SK-N-SH (cell line): ENCODE measurements at regions of chr3 and their contacts with region 1.

Region 1: GRCh38 chr3:192816351-192816750 is 89.0 kb upstream of the FGF12 start:
- DNase-seq: peak; percentile 41
- H3K4me3 ChIP-seq: peak overlapping the region in 1 of 2 experiments; percentile 8; a peak in 1 of 4 replicates
- H3K27ac ChIP-seq: no peak overlapping the region
- H3K4me1 ChIP-seq: peaks cover 2 to 8% of the 10 kb centered on the region in 2 experiments; a peak in 2 of 4 replicates
- H3K27me3 ChIP-seq: no peaks in the 10 kb centered on the region
- CTCF ChIP-seq: peak; percentile 79
- EP300 ChIP-seq: no peak
- RAD21 ChIP-seq: peak; percentile 93

Region 2: DNA sequence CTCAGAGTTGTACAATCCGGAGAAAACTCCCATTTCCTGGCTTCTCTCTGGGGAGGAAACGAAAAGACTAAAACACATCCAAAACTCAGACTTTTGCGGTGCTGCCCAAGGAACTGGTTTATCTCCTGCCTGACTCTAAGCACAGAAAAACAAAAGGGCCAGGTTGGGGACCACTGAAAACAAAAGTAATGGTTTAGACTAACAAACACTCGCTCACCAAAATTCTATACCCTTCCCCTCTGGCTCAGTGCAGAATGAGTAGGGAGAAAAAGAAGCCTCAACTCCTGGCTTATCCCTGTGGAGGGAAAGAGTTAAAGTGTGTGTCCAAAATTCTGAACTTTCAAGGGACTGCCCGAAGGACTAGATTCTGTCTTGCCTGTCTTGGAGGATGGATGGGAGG is 262.6 kb before region 1 on chr3:
- CTCF ChIA-PET with region 1: no interaction called
- POLR2A ChIA-PET with region 1: no interaction called
- DNase-seq: no peak
- H3K4me3 ChIP-seq: no peak overlapping the region
- H3K27ac ChIP-seq: no peak overlapping the region
- H3K4me1 ChIP-seq: no peaks in the 10 kb centered on the region
- H3K27me3 ChIP-seq: no peaks in the 10 kb centered on the region; the same call in 1 of the 2 replicates
- CTCF ChIP-seq: no peak
- EP300 ChIP-seq: no peak
- RAD21 ChIP-seq: no peak

Region 3: DNA sequence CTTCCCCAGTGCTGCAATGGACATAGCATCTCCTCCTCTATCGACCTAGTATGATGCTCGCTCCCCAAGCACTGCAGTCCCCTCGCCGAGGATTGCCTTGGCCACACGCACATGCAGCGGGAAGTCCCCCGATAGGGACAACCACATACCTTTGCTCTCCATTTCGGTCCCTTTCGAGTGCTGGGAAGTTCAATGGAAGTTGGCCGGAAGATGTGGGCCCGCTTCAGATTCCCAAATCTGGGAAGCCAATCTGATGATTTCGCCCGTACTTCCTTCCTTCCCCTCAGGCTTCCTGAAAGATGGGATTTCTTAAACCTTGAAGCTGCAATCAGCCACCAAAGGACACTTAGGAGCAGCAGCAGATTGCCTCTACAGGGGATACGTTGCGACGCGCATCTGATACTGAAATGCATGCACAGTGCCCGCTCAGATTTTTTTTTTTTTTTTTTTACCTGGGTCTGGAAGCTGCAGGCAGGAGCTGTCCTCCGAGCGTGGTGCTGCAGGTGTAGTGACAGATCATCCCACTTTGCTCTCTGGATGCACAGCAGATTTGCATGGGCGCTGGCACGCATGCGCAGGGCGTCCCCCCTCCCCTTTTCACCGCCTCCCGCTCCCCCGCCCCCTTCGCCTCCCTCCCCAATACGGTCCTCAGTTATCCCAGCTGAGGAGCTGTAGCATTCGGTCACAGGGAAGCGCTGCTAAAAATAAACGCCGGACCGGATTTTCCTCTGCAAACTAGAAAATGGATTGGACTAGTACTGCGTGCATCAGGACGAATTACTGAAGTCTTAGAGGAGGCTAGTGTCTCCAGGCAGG is 89.1 kb before region 1 on chr3 and contains the start of gene FGF12:
- CTCF ChIA-PET with region 1: no interaction called
- POLR2A ChIA-PET with region 1: no interaction called
- DNase-seq: peak; percentile 83
- H3K4me3 ChIP-seq: peak within 1 kb of the TSS; percentile 32 to 37
- H3K27ac ChIP-seq: no peak within 1 kb of the TSS
- H3K4me1 ChIP-seq: peaks cover 0 to 7% of the 10 kb centered on the region in 2 experiments; a peak in 2 of 4 replicates
- H3K27me3 ChIP-seq: no peaks in the 10 kb centered on the region
- CTCF ChIP-seq: no peak
- EP300 ChIP-seq: no peak
- RAD21 ChIP-seq: no peak
- polyA plus RNA-seq, gene FGF12: 0.18 and 0.30 TPM in 2 replicates

Region 4: DNA sequence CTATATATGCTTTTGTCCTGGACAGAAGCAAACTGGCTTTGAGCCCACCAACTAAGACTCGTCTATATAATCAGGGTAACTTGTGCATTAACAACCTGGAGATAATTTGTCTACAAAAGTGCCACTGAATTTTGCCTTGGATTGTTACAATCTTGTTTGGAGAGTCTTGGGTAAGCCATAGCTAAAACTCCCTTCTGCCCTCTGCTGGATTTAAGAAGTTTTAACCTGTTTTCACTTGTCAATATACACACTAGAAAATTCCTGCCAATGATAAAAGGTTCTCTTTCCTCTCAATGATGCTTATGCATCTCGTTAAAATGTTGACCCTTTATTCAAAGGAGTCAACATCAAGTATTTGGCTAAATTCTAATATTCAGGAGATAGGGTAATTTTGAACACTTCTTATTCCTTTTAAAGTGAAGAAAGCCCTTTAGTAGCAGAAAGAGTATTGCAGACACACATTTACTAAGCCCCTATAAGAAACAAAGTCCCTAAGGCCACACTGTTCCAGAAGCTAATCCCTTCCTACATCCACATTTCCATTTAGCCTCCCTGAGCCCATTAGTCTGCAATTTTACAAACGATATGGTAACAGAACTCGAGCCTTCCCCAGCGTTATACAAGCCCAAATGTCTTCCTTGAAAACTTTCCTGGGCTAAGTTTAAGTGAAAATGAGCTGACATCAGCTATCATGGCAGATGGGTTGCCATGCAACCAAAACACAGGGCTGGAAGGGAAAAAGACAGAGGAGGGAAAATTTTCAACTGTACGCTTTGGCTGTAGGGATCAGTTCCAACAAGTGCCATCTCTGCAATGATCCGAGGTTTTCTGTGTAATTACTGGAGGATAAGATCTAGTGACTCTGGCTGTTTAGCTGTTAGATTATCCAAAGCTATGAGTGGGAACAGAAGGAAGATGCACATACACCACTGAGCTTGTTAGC is 13.1 kb before region 1 on chr3:
- CTCF ChIA-PET with region 1: interaction called, 19 read pairs
- POLR2A ChIA-PET with region 1: no interaction called
- DNase-seq: peak; percentile 42
- H3K4me3 ChIP-seq: no peak overlapping the region
- H3K27ac ChIP-seq: no peak overlapping the region
- H3K4me1 ChIP-seq: peaks cover 0 to 3% of the 10 kb centered on the region in 2 experiments; a peak in 1 of 4 replicates
- H3K27me3 ChIP-seq: no peaks in the 10 kb centered on the region
- CTCF ChIP-seq: peak; percentile 69
- EP300 ChIP-seq: no peak
- RAD21 ChIP-seq: peak; percentile 55

Region 5: GRCh38 chr3:192917404-192918274 is 101.3 kb after region 1 on chr3 and contains the start of gene MB21D2:
- CTCF ChIA-PET with region 1: interaction called, 23 read pairs
- POLR2A ChIA-PET with region 1: no interaction called
- DNase-seq: peak; percentile 94
- H3K4me3 ChIP-seq: peak within 1 kb of the TSS; percentile 91 to 98
- H3K27ac ChIP-seq: peak within 1 kb of the TSS; percentile 85 to 95
- H3K4me1 ChIP-seq: peaks cover 7 to 15% of the 10 kb centered on the region in 2 experiments; a peak in 3 of 4 replicates
- H3K27me3 ChIP-seq: no peaks in the 10 kb centered on the region
- CTCF ChIP-seq: no peak
- EP300 ChIP-seq: no peak
- RAD21 ChIP-seq: peak; percentile 22; the same call in 1 of the 2 replicates
- polyA plus RNA-seq, gene MB21D2: 12.7 and 15.4 TPM in 2 replicates

Region 6: GRCh38 chr3:192943393-192943792 is 127.0 kb after region 1 on chr3:
- CTCF ChIA-PET with region 1: no interaction called
- POLR2A ChIA-PET with region 1: no interaction called
- DNase-seq: no peak
- H3K4me3 ChIP-seq: no peak overlapping the region
- H3K27ac ChIP-seq: no peak overlapping the region
- H3K4me1 ChIP-seq: no peaks in the 10 kb centered on the region
- H3K27me3 ChIP-seq: no peaks in the 10 kb centered on the region
- CTCF ChIP-seq: no peak
- EP300 ChIP-seq: no peak
- RAD21 ChIP-seq: no peak

Region 7: GRCh38 chr3:193030276-193030675 is 213.9 kb after region 1 on chr3:
- CTCF ChIA-PET with region 1: interaction called, 10 read pairs
- POLR2A ChIA-PET with region 1: no interaction called
- DNase-seq: no peak
- H3K4me3 ChIP-seq: no peak overlapping the region
- H3K27ac ChIP-seq: no peak overlapping the region
- H3K4me1 ChIP-seq: no peaks in the 10 kb centered on the region
- H3K27me3 ChIP-seq: no peaks in the 10 kb centered on the region
- CTCF ChIP-seq: no peak
- EP300 ChIP-seq: no peak
- RAD21 ChIP-seq: no peak

Region 8: GRCh38 chr3:193342551-193342950 is 526.2 kb after region 1 on chr3:
- CTCF ChIA-PET with region 1: no interaction called
- POLR2A ChIA-PET with region 1: no interaction called
- DNase-seq: no peak
- H3K4me3 ChIP-seq: no peak overlapping the region
- H3K27ac ChIP-seq: no peak overlapping the region
- H3K4me1 ChIP-seq: no peaks in the 10 kb centered on the region
- H3K27me3 ChIP-seq: no peaks in the 10 kb centered on the region
- CTCF ChIP-seq: no peak
- EP300 ChIP-seq: no peak
- RAD21 ChIP-seq: no peak

Region 9: DNA sequence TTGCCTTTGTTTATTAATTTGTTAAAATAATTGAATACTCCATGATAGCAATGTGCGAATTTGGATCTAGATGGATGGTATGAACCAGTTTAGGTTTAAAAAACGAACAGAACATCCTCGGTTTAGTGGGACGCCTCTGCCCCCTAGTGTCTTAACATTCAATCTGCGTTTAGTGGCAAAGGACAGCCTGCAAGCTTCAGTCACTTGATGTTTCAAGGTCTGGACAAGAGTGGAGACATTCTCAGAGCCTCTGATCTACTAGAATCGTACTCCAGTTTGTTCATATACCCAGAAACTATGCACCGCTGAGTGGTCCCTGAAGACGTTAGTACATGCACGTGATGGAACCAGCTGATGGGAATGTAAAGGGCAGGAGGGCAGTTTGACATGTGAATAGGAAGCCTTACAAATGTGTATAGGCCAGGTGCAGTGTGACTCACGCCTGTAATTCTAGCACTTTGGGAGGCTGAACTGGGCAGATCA is 756.1 kb after region 1 on chr3:
- CTCF ChIA-PET with region 1: interaction called, 56 read pairs
- POLR2A ChIA-PET with region 1: no interaction called
- DNase-seq: peak; percentile 61
- H3K4me3 ChIP-seq: peak overlapping the region in 1 of 2 experiments; percentile 14; a peak in 1 of 4 replicates
- H3K27ac ChIP-seq: no peak overlapping the region
- H3K4me1 ChIP-seq: no peaks in the 10 kb centered on the region
- H3K27me3 ChIP-seq: 0 out of 2 replicates have a peak, but pooled peaks cover 6% of the 10 kb centered on the region
- CTCF ChIP-seq: peak; percentile 89
- EP300 ChIP-seq: no peak
- RAD21 ChIP-seq: peak; percentile 95